Panc1 (cell line): ENCODE measurements at regions of chr6 and their contacts with region 1.

Region 1: GRCh38 chr6:108927927-108928326 is 79.7 kb downstream of the ARMC2 start:
- DNase-seq: no peak
- ATAC-seq: no peak
- H3K4me3 ChIP-seq: no peak overlapping the region
- H3K27ac ChIP-seq: no peak overlapping the region
- H3K4me1 ChIP-seq: no peaks in the 10 kb centered on the region
- H3K27me3 ChIP-seq: peaks cover 18% of the 10 kb centered on the region
- CTCF ChIP-seq: no peak

Region 2: DNA sequence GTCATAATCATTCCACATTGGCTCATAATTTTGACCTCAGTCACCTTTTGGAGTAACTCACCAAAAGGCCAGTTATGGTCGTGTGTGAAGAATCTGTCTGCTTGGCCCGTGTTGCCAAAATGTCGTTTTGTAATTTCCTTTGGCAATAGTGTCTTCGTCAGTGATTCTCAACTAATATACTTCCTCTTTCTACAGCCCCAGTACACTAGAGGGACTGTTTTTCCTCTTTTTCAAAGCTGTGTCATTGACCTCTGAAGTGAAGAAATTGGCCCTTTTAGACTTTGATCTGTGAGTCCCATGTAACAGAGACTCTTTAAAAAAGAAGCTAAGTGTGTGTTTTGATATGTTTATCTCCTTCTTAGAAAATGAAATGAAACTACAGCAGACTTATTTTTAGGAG is 362.0 kb before region 1 on chr6:
- CTCF ChIA-PET with region 1: no interaction called
- POLR2A ChIA-PET with region 1: no interaction called
- in situ Hi-C with region 1: no loop called
- intact Hi-C with region 1: no loop called
- DNase-seq: no peak
- ATAC-seq: no peak
- H3K4me3 ChIP-seq: no peak overlapping the region
- H3K27ac ChIP-seq: no peak overlapping the region
- H3K4me1 ChIP-seq: peaks cover 34% of the 10 kb centered on the region
- H3K27me3 ChIP-seq: no peaks in the 10 kb centered on the region
- CTCF ChIP-seq: no peak

Region 3: DNA sequence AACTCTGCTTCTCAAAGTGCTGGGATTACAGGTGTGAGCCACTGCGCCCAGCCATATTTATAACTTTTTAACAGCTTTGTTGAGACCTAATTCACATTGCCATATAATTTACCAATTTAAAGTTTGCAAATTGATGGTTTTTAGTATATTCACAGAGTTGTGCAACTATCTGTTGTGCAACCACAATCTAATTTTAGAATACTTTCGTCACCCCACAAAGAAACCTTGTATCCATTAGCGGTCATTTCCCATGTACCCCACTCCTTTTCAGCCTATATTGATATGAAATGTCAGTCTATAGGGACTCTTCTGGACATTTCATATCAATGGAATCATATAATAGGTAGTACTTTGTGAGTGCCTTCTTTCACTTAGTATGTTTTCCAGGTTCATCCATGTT is 311.4 kb before region 1 on chr6:
- CTCF ChIA-PET with region 1: no interaction called
- POLR2A ChIA-PET with region 1: no interaction called
- in situ Hi-C with region 1: no loop called
- intact Hi-C with region 1: no loop called
- DNase-seq: no peak
- ATAC-seq: no peak
- H3K4me3 ChIP-seq: no peak overlapping the region
- H3K27ac ChIP-seq: no peak overlapping the region
- H3K4me1 ChIP-seq: peaks cover 9% of the 10 kb centered on the region
- H3K27me3 ChIP-seq: no peaks in the 10 kb centered on the region
- CTCF ChIP-seq: no peak

Region 4: DNA sequence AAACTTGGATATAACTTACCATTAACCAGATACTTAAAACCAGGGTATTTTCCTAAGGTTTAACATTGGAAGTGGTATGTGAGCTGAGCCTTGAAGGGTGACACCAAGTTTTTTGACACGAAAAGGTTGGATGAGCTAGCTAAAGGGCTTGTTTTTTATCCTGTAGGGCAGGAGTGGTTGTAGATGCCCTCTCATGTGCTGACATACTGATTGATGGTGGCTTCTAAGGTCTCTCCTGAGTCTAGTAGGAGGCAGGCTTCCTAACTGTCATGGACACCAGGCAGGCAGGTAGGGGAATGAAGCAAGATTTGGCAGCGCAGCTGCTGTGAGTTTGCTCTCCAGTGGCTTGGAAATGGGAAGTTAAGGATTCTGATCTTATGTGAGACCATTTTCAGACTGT is 301.1 kb before region 1 on chr6:
- CTCF ChIA-PET with region 1: no interaction called
- POLR2A ChIA-PET with region 1: interaction called, 10 read pairs
- in situ Hi-C with region 1: no loop called
- intact Hi-C with region 1: no loop called
- DNase-seq: no peak
- ATAC-seq: no peak
- H3K4me3 ChIP-seq: no peak overlapping the region
- H3K27ac ChIP-seq: no peak overlapping the region
- H3K4me1 ChIP-seq: peaks cover 5% of the 10 kb centered on the region; the same call in 1 of the 2 replicates
- H3K27me3 ChIP-seq: no peaks in the 10 kb centered on the region
- CTCF ChIP-seq: no peak

Region 5: DNA sequence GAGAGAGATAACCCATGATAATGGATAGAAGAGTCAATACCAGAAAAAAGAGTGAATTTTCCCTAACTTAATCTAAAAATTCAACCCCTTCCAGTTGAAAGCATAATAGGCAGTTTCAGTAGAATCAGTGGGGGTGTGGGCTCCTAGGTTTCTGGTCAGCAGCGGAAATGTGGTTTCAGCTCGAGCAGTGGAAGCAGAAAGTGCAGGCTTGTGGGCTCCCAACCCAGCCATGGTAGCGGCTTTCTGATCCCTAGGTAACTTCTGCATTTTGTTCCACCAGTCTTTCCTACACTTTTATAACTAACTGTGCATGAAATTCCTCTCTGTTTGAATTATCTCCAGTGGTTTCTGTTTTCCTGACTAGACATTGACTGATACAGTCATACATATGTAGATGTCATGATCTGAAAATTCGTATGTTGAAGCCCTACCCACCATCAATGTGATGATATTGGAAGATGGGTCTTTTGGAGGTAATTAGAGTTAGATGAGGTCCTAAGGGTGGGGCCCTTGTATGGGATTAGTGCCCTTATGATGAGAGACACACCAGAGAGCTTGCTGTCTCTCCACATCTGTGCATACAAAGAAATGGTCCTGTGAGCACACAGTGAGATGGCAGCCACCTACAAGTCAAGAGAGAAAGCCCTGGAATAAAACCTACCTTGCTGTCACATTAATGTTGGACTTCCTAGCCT is 1494.0 kb after region 1 on chr6:
- CTCF ChIA-PET with region 1: no interaction called
- POLR2A ChIA-PET with region 1: interaction called, 12 read pairs
- in situ Hi-C with region 1: no loop called
- intact Hi-C with region 1: no loop called
- DNase-seq: no peak
- ATAC-seq: no peak
- H3K4me3 ChIP-seq: no peak overlapping the region
- H3K27ac ChIP-seq: no peak overlapping the region
- H3K4me1 ChIP-seq: no peaks in the 10 kb centered on the region
- H3K27me3 ChIP-seq: peaks cover 40% of the 10 kb centered on the region
- CTCF ChIP-seq: no peak